Natural killer cell (primary cell): ENCODE measurements at regions of chr12 and their contacts with region 1.

Region 1: GRCh38 chr12:133037207-133038005 is at the start of gene ZNF84:
- DNase-seq: peak; percentile 93 to 99
- ATAC-seq: peak; percentile 86 to 97 (median 87)
- H3K4me3 ChIP-seq: peak within 1 kb of the TSS; percentile 71
- H3K4me3 Mint-ChIP-seq: peak within 1 kb of the TSS; percentile 98
- H3K27ac ChIP-seq: peak within 1 kb of the TSS; percentile 97
- H3K27ac Mint-ChIP-seq: peak within 1 kb of the TSS; percentile 94 to 96
- H3K4me1 ChIP-seq: peaks cover 4% of the 10 kb centered on the region
- H3K4me1 Mint-ChIP-seq: peaks cover 5 to 15% of the 10 kb centered on the region in 2 donors
- H3K27me3 ChIP-seq: no peaks in the 10 kb centered on the region
- H3K27me3 Mint-ChIP-seq: peaks cover 0 to 10% of the 10 kb centered on the region in 2 donors
- CTCF ChIP-seq: no peak
- total RNA-seq, gene ZNF84: 23.4 to 31.1 (median 26.1) TPM

Region 2: GRCh38 chr12:132887513-132888351 is 149.7 kb before region 1 on chr12 and contains the start of gene CHFR:
- intact Hi-C with region 1: loop called (anchors 1 kb)
- DNase-seq: peak; percentile 92 to 97
- ATAC-seq: peak; percentile 97 to 100 (median 97)
- H3K4me3 ChIP-seq: peak within 1 kb of the TSS; percentile 91
- H3K4me3 Mint-ChIP-seq: peak within 1 kb of the TSS; percentile 98
- H3K27ac ChIP-seq: peak within 1 kb of the TSS; percentile 99
- H3K27ac Mint-ChIP-seq: peak within 1 kb of the TSS; percentile 100
- H3K4me1 ChIP-seq: peaks cover 12% of the 10 kb centered on the region
- H3K4me1 Mint-ChIP-seq: peaks cover 16 to 22% of the 10 kb centered on the region in 2 donors
- H3K27me3 ChIP-seq: no peaks in the 10 kb centered on the region
- H3K27me3 Mint-ChIP-seq: peaks cover 8 to 10% of the 10 kb centered on the region in 2 donors
- CTCF ChIP-seq: no peak
- total RNA-seq, gene CHFR: 161 to 170 (median 168) TPM

Region 3: DNA sequence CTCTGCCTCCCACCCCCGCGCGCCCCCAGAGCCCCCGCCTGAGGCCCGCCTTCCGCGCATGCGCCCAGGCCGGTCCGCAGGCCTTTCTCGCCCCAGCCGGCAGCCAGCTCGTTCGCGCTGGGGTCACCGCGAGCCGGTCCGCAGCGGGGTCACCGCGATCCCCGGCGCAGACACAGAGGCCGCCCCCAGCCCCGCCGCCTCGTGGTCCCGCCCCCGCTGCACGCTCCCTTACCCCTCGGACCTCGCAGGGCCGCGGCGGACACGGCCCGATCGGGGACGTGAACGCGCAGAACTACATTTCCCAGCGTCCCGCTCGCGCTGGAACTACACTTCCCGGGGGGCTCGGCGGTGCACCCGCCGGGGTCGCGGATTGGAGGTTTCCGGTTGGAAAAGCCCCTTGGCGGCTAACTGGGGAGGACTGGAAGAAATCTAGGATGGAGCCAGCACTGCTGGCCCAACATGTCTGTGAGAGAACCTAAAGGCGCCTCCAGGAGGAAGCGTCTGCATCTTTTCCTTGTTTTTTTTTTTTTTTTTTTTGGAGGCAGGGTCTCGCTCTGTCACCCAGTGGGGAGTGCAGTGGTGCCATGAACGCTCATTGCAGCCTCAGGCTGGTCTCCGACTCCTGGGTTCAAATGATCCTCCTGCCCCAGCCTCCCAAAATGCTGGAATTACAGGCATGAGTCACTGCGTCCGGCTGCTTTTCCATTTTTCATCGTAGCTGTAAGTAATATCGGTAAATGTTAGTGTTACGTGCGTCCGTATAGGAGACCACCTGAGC is 81.2 kb before region 1 on chr12 and contains the start of gene ZNF605:
- intact Hi-C with region 1: loop called (anchors 1 kb)
- DNase-seq: peak; percentile 85 to 94
- ATAC-seq: peak; percentile 94 to 97 (median 95)
- H3K4me3 ChIP-seq: peak within 1 kb of the TSS; percentile 92
- H3K4me3 Mint-ChIP-seq: peak within 1 kb of the TSS; percentile 90
- H3K27ac ChIP-seq: peak within 1 kb of the TSS; percentile 77
- H3K27ac Mint-ChIP-seq: peak within 1 kb of the TSS; percentile 87 to 94
- H3K4me1 ChIP-seq: peaks cover 27% of the 10 kb centered on the region
- H3K4me1 Mint-ChIP-seq: peaks cover 15 to 39% of the 10 kb centered on the region in 2 donors
- H3K27me3 ChIP-seq: no peaks in the 10 kb centered on the region
- H3K27me3 Mint-ChIP-seq: no peaks in the 10 kb centered on the region
- CTCF ChIP-seq: no peak
- total RNA-seq, gene ZNF605: 6.0 to 15.8 (median 7.6) TPM

Region 4: DNA sequence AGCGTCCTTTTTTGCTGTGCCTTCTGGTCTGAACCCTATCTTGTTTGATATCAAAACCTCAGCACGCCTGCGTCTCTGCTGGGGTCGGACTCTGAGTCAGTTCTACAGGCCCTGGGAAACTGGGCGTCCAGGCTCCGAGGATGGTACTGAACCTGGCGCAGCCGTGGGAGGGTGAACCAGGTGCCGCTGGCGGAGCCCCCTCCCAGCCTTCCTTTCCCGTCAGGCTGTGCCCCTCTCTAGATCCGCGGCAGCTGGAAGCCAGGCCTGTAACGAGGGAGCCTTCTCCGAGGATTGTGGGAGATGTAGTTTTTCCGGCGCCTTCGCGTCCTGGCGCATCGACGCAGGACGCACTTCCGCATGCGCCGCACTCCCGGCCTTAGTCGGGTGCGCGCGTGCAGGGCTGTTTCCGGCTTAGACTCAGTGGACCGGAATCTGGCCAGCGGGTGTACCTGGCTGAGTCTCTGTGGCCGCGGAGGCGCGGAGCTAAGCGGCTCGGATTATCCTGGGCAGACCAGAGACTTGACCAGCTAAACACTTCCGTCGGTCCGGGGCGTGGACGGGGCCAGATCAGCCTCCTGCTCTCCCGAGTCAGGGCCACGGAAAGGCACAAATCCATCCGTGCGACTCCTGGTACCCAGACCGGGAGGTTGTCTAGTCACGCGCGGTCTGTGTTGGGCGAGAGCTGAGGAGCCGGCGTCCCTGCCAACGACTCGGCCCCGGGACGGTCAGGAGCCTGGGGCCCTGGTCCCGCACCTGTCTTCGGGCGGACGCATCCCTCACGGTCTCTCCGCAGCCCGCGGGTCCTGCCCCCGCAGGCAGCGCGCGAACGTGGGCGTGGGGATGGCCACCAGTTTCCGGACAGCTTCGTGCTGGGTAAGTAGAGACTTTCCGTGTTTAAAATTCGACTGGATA is 51.1 kb before region 1 on chr12 and contains the start of gene ZNF26:
- intact Hi-C with region 1: loop called (anchors 1 kb)
- DNase-seq: peak; percentile 80 to 95
- ATAC-seq: peak; percentile 96 to 99 (median 98)
- H3K4me3 ChIP-seq: peak within 1 kb of the TSS; percentile 73
- H3K4me3 Mint-ChIP-seq: peak within 1 kb of the TSS; percentile 92
- H3K27ac ChIP-seq: peak within 1 kb of the TSS; percentile 89
- H3K27ac Mint-ChIP-seq: peak within 1 kb of the TSS; percentile 95 to 96
- H3K4me1 ChIP-seq: peaks cover 23% of the 10 kb centered on the region
- H3K4me1 Mint-ChIP-seq: peaks cover 28 to 34% of the 10 kb centered on the region in 2 donors
- H3K27me3 ChIP-seq: peaks cover 3% of the 10 kb centered on the region
- H3K27me3 Mint-ChIP-seq: peaks cover 3 to 17% of the 10 kb centered on the region in 2 donors
- CTCF ChIP-seq: no peak
- total RNA-seq, gene ZNF26: 38.7 to 45.1 (median 43.0) TPM

Region 5: DNA sequence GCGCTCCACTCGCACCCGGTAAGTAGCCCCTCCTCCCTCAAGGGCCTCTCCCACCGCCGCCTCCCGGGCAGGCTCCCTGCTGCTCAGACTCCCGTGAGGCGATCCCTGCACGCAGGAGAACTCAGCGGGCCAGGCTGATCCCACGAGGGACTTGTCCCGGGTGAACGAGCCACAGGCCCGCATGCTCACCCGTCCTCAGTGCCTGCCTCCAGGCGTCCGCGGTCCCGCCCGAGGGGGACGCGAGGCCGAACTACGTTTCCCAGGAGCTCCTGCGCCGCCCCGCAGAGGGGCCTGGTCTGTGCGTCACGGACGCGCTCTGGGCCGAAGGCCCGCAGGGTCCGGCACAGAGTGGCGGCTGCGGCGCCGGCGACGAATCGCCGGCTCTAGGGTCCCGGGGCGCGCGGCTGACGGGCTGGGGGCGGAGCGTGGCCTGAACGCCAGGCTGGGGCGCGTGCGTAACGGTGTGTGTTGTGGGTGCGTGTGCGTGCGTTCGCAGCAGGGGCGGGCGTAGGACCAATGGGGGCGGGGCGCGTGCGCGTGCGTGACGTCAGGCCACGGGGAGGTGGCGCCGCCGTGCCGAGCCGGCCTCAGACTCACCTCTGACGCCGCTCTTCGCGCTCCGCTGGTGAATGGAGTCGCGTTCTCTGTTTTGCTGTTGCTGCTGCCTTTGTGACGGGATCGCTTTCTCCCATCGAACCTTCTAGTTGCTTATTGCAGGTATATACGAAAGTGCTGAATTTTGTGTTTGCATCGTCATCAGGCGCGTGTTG is 92.8 kb after region 1 on chr12 and contains the starts of genes ZNF10 and ZNF891:
- intact Hi-C with region 1: loop called (anchors 1 kb)
- DNase-seq: peak; percentile 98
- ATAC-seq: peak; percentile 87 to 96 (median 87)
- H3K4me3 ChIP-seq: peak within 1 kb of the TSS; percentile 80
- H3K4me3 Mint-ChIP-seq: peak within 1 kb of the TSS; percentile 95
- H3K27ac ChIP-seq: peak within 1 kb of the TSS; percentile 99
- H3K27ac Mint-ChIP-seq: peak within 1 kb of the TSS; percentile 99 to 100
- H3K4me1 ChIP-seq: peaks cover 9% of the 10 kb centered on the region
- H3K4me1 Mint-ChIP-seq: peaks cover 20 to 24% of the 10 kb centered on the region in 2 donors
- H3K27me3 ChIP-seq: no peaks in the 10 kb centered on the region
- H3K27me3 Mint-ChIP-seq: no peaks in the 10 kb centered on the region
- CTCF ChIP-seq: no peak
- total RNA-seq, gene ZNF10: 12.9 to 27.9 (median 26.0) TPM
- total RNA-seq, gene ZNF891: 1.9 to 3.1 (median 2.3) TPM

Region 6: GRCh38 chr12:133181238-133181959 is 144.0 kb after region 1 on chr12 and contains the start of gene ZNF268:
- intact Hi-C with region 1: loop called (anchors 1 kb)
- DNase-seq: peak; percentile 90 to 93
- ATAC-seq: peak; percentile 96
- H3K4me3 ChIP-seq: peak within 1 kb of the TSS; percentile 71
- H3K4me3 Mint-ChIP-seq: peak within 1 kb of the TSS; percentile 96
- H3K27ac ChIP-seq: peak within 1 kb of the TSS; percentile 75
- H3K27ac Mint-ChIP-seq: peak within 1 kb of the TSS; percentile 92 to 96
- H3K4me1 ChIP-seq: peaks cover 9% of the 10 kb centered on the region
- H3K4me1 Mint-ChIP-seq: peaks cover 27 to 38% of the 10 kb centered on the region in 2 donors
- H3K27me3 ChIP-seq: no peaks in the 10 kb centered on the region
- H3K27me3 Mint-ChIP-seq: peaks cover 5 to 8% of the 10 kb centered on the region in 2 donors
- CTCF ChIP-seq: peak; percentile 72
- total RNA-seq, gene ZNF268: 12.7 to 17.5 (median 14.3) TPM